Tibial artery (tissue), 4 donors: ENCODE measurements at regions of chr6 and their contacts with region 1.

Region 1: GRCh38 chr6:9405369-9405768 is 970.0 kb upstream of the SLC35B3 start:
- DNase-seq: no peak
- H3K4me3 ChIP-seq: no peak overlapping the region
- H3K27ac ChIP-seq: no peak overlapping the region
- H3K4me1 ChIP-seq: no peaks in the 10 kb centered on the region
- H3K27me3 ChIP-seq: no peaks in the 10 kb centered on the region
- CTCF ChIP-seq: no peak

Region 2: GRCh38 chr6:7865781-7866180 is 1539.6 kb before region 1 on chr6:
- intact Hi-C with region 1: loop called (anchors 10 kb)
- DNase-seq: no peak
- H3K4me3 ChIP-seq: no peak overlapping the region
- H3K27ac ChIP-seq: no peak overlapping the region
- H3K4me1 ChIP-seq: no peaks in the 10 kb centered on the region
- H3K27me3 ChIP-seq: no peaks in the 10 kb centered on the region
- CTCF ChIP-seq: no peak